ENCODE measurements at regions of chr17 and their contacts with region 1.

Region 1: DNA sequence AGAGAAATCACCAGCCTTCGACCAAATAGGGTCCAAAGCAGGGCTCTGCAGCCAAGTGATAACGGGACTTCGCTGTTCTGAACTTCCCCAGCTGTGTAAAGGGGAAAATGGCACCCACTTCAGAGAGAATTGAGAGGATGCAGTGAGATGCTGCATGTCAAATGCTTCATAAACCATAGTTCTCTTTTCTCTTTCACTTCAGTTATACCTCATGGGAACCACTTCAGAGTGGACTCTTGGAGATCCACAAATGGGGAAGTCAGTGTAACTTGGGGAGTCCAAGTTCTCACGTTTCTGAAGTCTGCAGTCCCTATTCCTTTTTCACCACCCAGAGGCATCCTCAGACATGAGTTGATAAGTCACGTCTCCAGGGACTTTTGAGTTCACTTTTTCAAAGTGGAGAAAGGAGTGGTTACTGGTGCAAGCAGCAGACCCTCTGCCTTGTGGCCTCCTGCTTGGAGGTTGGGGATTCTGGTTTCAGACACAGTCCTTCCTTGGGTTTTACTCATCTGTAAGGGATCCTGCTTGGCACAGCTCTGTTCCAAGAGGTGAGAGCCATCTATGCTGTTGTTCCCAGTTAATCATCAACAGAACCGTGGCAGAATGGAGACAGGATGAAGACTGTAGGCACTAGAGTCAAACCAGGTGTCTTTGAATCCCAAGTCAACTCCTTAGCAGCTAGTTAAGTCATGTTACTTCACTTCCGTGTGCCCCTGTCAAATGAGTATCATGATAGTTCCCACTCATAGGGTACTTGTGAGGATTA is 123.4 kb upstream of the NOL11 start:
- DNase-seq: no peak

Region 2: GRCh38 chr17:67610059-67610458 is 15.8 kb after region 1 on chr17:
- intact Hi-C with region 1: loop called in 1 of 2 experiments (anchors 1 kb)
- DNase-seq: no peak

Region 3: DNA sequence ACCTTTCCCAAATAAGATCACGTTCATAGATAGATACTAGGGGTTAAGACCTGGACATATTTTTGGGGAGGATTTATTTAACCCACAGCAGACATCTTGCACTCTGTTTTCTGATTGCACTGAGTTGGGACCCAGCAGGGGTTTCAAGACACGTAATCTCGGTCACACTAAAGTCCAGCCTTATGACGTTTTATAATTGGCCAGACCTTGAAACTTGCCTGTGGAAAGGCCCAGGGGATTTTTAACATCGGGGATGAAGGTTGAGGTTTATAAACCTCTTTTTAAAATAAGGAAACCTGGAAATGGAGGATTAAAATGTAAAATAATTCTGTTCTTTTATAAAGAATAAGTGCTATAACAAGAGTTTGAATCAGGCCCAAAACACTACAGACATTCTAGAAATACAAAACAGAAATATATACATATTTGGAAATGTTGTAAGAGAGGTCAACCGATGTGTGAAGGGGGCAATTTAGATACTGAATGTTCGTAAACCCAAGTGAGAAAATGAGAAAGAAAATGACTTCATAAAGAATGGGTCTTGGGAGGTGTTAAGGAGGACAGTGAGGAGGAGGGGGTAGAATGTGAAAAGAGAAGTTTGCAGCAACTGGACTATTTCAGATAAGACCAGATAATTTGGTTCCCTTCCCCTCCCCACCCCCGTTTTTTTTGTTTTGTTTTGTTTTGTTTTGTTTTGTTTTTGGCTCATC is 62.4 kb after region 1 on chr17:
- intact Hi-C with region 1: loop called in 1 of 2 experiments (anchors 10 kb)
- DNase-seq: no peak